Vagina (tissue), 2 donors: ENCODE measurements at regions of chr10 and their contacts with region 1.

Region 1: GRCh38 chr10:1726861-1727260 is 10.5 kb downstream of the ADARB2 start:
- DNase-seq: no peak
- H3K4me3 ChIP-seq: no peak overlapping the region
- H3K27ac ChIP-seq: no peak overlapping the region
- H3K4me1 ChIP-seq: no peaks in the 10 kb centered on the region
- H3K27me3 ChIP-seq: no peaks in the 10 kb centered on the region
- CTCF ChIP-seq: no peak
- POLR2A ChIP-seq: no peak

Region 2: GRCh38 chr10:1297566-1298301 is 429.1 kb before region 1 on chr10:
- intact Hi-C with region 1: no loop called
- DNase-seq: no peak
- H3K4me3 ChIP-seq: no peak overlapping the region
- H3K27ac ChIP-seq: no peak overlapping the region
- H3K4me1 ChIP-seq: peaks cover 7% of the 10 kb centered on the region
- H3K27me3 ChIP-seq: no peaks in the 10 kb centered on the region
- CTCF ChIP-seq: no peak
- POLR2A ChIP-seq: no peak

Region 3: DNA sequence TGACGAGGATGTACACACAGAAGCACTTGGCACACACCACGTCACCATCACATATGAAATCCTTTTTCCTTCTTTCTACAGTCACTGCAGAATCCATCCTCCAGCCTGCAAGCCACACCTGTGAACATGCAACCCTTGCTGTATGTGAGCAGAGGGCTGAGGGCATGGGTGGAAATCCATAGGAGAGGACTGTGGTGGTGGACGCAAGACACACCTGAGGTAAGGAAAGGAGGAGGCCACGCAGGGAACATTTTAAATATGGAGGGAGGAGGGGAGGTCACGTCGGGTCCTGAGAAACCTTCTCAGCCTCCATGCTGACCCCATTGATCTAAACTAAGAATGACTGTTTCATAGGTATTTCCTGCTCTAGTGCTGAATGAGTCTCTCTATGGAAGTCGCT is 18.1 kb before region 1 on chr10:
- intact Hi-C with region 1: loop called (anchors 1 kb)
- DNase-seq: peak; percentile 76 to 91
- H3K4me3 ChIP-seq: no peak overlapping the region
- H3K27ac ChIP-seq: no peak overlapping the region
- H3K4me1 ChIP-seq: peaks cover 10% of the 10 kb centered on the region
- H3K27me3 ChIP-seq: no peaks in the 10 kb centered on the region
- CTCF ChIP-seq: no peak
- POLR2A ChIP-seq: no peak